ENCODE measurements at regions of chr2 and their contacts with region 1.

Region 1: DNA sequence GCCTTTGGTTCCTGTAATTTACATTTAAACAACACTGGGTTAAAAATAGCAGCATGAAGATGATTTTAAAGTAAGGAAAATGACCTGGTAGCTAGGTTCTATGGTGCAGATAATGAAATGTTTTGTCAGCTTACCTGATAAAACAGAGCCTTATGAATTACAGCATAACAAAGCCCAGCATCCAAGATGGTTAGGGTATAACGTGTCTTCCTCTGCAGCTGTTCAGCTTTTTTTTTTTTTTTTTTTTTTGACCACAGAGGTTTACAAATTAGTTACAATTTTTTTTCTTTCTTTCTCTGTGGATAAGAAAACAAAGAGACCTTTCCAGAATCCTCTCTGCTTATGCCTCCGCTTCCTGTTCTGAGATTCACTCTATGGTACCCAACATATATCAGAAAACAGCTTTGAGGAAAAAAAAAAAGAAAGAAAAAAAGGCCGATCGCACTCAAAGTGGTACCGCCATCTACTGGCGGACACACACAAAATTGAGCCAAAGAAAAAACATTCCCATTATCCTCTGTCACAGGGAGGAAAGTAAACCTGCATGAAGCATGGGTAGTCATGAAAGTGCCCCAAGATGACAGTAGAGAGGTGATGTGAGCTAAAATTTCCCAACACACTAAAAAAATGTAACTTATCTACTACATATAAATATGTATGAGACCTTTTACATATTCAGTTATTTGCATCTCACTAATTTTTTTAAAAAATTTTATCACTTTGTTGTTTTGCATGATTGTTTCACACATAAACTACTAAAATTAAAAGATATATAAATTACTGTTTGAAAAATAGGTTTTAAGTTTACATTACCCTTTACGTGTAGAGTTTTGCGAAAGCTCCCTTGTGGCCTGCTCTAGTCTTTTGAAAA is at the start of gene SCN3A:
- DNase-seq: peak; percentile 77
- H3K4me3 ChIP-seq: peak within 1 kb of the TSS; percentile 68
- H3K27ac ChIP-seq: peak within 1 kb of the TSS; percentile 63
- H3K4me1 ChIP-seq: peaks cover 28% of the 10 kb centered on the region
- CTCF ChIP-seq: peak; percentile 97
- total RNA-seq, gene SCN3A: 7.1 and 7.3 TPM in 2 replicates

Region 2: DNA sequence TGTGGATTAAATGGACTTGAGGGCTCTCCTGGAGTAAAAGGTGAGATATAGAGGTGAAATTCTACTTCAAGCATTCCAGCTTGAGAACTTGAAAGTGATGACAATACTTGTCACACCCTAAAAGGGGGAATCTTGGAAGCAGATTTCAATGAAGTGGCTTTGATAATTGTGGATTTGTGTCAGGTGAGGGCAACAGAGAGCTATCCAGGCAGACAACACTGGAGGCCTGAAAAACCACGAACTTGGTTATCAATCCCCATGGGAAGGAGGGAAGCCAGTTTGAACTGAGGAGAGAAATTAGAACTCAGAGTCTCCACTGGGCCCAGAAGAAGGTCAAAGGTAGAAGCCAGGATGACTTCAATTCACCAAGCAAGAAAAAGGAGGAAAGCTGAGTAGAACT is 1732.0 kb before region 1 on chr2:
- CTCF ChIA-PET with region 1: no interaction called
- POLR2A ChIA-PET with region 1: no interaction called
- intact Hi-C with region 1: no loop called
- DNase-seq: no peak
- H3K4me3 ChIP-seq: no peak overlapping the region
- H3K27ac ChIP-seq: no peak overlapping the region
- H3K4me1 ChIP-seq: no peaks in the 10 kb centered on the region
- CTCF ChIP-seq: no peak

Region 3: DNA sequence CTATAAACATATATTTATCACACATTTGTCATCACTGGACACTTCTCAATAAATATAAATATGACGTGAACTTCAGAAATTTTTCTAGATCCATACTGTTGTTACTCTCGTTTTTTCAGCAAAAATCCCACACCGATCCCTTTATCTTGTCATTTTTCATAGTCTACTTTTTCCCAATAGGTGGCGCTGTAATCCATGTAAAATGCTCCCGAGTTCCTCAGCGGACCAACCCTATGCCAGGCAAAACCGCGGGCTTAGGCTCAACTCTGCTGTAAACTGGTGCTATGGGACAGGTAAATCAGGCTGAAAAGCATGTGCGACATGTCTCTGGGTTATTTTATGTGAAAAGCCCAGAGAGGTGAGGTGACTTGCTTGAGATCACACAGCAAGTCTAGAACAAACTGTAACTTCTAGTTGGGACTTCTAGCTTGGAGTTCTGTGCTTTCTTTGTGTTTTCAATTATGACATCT is 466.3 kb before region 1 on chr2:
- CTCF ChIA-PET with region 1: no interaction called
- POLR2A ChIA-PET with region 1: no interaction called
- intact Hi-C with region 1: loop called (anchors 2 kb)
- DNase-seq: peak; percentile 73
- H3K4me3 ChIP-seq: no peak overlapping the region
- H3K27ac ChIP-seq: no peak overlapping the region
- H3K4me1 ChIP-seq: peaks cover 7% of the 10 kb centered on the region
- CTCF ChIP-seq: peak; percentile 94

Region 4: DNA sequence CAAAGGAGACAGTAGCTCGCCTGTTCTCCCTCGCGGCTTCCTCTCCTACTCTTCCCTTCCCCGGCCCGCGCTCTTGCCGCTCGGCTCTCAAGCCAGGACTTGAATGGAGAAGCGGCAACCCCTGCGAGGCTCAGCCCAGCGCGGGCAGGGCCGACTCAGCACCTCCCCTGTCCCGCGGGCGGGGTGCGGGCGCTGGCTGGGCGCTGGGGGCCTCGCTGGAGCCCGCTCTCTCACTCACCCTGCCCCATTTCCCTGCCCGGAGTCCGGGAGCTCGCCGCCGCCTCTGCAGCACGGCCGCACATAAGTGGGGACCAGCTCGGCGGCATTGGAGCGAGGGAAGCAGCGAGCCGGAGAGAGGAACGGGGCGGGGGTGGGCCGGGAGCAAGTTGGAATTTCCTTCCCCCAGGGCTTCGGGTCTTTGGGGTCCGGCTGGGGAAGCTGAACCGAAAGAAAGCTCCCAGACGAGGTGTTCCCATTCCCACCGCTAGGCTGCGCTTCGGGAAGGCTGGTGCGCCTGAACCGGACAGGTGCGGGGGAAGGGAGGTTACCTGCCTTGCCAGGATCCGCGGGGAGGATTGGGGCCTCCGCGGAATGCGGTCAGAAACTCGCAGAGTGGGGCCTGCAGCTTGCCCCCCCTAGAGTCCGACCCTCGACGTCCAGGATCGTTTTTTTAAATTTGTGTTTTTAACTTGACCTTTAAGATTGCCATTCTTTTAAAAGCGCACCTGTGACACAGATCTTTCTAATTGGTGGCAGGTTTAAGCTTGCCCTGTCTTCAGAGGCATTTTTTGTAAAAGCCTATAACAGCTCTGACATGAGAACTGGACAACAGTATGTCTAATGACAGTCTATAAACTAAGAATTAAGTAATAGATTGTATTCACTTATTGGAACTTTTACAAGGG is 362.0 kb before region 1 on chr2 and contains the start of gene COBLL1:
- CTCF ChIA-PET with region 1: no interaction called
- POLR2A ChIA-PET with region 1: no interaction called
- intact Hi-C with region 1: loop called (anchors 5 kb)
- DNase-seq: peak; percentile 29
- H3K4me3 ChIP-seq: peak within 1 kb of the TSS; percentile 65
- H3K27ac ChIP-seq: no peak within 1 kb of the TSS
- H3K4me1 ChIP-seq: peaks cover 3% of the 10 kb centered on the region
- CTCF ChIP-seq: peak; percentile 72
- total RNA-seq, gene COBLL1: 0.79 and 0.88 TPM in 2 replicates

Region 5: DNA sequence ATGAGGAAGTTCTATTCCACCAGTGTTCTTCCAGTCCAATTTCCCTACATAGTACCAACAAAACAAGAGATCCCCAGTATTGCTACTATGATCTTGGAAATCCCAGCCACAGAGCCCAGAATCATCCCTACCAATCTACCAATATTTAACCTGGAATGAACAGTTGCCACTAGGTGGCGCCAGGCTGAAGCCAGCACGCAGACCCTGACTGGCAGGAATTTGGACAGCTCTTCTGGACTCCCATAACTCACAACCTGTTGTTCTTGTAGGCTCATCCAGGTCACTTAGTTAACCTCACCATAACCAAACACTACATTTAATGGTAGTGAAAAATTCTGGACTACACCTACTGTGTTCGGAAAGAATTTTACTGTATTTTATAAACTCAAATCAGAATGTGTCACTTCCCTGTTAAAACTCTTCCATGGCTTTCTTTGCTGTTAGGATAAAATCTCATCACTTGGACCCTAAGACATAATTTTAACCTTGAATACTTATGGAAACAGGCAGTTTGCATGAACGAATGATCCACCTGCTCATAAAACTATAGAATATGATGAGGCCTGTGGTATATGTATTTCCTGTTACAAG is 188.8 kb before region 1 on chr2:
- CTCF ChIA-PET with region 1: interaction called, 6 read pairs
- POLR2A ChIA-PET with region 1: interaction called, 3 read pairs
- intact Hi-C with region 1: loop called (anchors 1 kb)
- DNase-seq: peak; percentile 72
- H3K4me3 ChIP-seq: no peak overlapping the region
- H3K27ac ChIP-seq: no peak overlapping the region
- H3K4me1 ChIP-seq: peaks cover 5% of the 10 kb centered on the region
- CTCF ChIP-seq: peak; percentile 98

Region 6: DNA sequence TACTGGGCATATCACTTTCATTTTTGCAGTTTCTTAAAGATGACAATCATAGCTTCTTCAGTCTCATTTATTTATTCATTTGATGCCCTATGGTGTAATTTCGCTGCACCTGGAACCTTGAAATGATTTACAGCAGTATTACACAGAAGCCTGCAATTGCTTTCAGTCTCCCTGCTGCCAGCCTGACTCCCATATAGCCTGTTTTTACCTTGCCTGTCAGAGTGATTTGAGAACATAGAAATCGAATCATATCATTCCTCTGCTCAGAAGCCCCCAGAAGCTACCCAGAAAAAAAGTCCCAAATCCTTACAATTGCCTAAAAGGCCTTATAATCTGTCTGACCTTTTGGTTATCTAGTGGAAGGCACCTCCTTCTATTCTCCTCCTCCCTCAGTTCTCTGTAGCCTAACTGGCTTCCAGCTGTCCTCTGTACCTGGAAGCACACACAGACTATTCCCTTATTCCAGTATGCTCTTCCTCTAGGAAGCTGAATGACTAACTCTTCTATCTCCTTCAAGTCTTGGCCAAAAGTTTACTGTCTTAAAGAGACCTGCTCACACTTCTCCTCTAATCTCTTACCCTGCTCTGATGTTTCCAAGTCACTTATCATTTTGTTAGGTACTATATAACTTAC is 12.7 kb before region 1 on chr2:
- CTCF ChIA-PET with region 1: interaction called, 4 read pairs
- POLR2A ChIA-PET with region 1: interaction called, 14 read pairs
- intact Hi-C with region 1: loop called (anchors 1 kb)
- DNase-seq: peak; percentile 4
- H3K4me3 ChIP-seq: peak overlapping the region; percentile 13
- H3K27ac ChIP-seq: peak overlapping the region; percentile 10
- H3K4me1 ChIP-seq: peaks cover 61% of the 10 kb centered on the region
- CTCF ChIP-seq: no peak

Region 7: DNA sequence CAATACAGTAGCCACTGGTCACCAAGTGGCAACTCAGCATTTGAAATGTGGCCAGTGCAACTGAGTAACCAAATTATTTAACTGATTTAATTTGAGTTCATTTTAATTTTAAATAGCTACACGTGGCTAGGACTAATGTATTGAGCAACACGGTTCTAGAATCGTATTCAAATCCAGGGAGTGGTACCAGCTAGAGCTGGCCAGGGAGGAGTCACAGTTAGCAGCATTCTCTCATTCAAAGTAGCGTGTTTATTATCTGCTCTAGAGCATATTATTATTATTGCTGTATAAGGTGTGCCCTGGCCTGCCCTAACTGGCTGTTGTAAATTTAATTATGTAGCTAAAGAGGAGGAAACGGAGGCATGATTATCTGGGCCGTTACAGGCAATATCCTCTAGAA is 497.2 kb after region 1 on chr2:
- CTCF ChIA-PET with region 1: no interaction called
- POLR2A ChIA-PET with region 1: no interaction called
- intact Hi-C with region 1: no loop called
- DNase-seq: no peak
- H3K4me3 ChIP-seq: no peak overlapping the region
- H3K27ac ChIP-seq: no peak overlapping the region
- H3K4me1 ChIP-seq: peaks cover 23% of the 10 kb centered on the region
- CTCF ChIP-seq: no peak